ENCODE measurements at regions of chr6 and their contacts with region 1.

Region 1: DNA sequence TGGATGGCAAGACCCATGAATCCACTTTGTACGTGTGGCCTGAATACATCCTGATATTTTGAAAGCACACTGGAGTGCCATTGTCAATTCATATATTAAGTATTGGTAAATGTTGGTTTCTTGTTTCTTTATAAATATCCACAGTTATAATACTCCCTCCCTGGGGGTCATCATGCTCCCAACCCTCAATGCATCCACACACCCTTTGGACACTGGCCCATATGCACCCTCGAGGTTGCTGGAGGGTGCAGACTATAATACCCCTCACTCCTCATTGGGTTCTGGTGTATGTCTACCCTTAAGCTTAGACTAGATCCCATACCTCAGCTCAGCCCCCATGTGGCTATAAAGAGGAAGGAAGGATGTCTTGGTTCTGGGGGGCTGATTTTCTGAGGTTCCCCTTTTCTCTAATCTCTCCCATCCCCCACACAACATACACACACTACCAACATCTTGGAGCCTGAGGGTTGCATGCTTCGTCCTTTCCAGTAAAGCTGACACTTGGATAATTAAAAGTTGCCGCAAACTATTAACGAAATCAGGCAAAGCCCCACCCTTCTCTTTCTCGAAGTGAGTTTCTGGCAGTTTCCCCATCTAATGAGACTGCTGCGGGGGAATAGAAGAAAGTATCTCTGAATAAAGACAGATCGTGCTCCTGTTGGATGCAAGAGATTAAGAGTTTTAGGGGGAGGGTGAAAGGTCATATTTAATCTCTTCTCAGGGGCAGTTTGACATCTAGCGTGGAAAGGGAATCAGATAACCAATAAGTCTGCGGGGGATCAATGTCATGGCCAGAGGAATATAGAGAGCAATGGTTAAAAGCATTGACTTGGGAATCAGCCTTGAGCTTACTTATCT is 7.4 kb downstream of the PIM1 start:
- DNase-seq: no peak
- ATAC-seq: peak; percentile 35
- H3K4me3 Mint-ChIP-seq: peak overlapping the region; percentile 89
- H3K27ac Mint-ChIP-seq: peak overlapping the region; percentile 97
- H3K4me1 Mint-ChIP-seq: peaks cover 62% of the 10 kb centered on the region
- H3K27me3 Mint-ChIP-seq: no peaks in the 10 kb centered on the region

Region 2: DNA sequence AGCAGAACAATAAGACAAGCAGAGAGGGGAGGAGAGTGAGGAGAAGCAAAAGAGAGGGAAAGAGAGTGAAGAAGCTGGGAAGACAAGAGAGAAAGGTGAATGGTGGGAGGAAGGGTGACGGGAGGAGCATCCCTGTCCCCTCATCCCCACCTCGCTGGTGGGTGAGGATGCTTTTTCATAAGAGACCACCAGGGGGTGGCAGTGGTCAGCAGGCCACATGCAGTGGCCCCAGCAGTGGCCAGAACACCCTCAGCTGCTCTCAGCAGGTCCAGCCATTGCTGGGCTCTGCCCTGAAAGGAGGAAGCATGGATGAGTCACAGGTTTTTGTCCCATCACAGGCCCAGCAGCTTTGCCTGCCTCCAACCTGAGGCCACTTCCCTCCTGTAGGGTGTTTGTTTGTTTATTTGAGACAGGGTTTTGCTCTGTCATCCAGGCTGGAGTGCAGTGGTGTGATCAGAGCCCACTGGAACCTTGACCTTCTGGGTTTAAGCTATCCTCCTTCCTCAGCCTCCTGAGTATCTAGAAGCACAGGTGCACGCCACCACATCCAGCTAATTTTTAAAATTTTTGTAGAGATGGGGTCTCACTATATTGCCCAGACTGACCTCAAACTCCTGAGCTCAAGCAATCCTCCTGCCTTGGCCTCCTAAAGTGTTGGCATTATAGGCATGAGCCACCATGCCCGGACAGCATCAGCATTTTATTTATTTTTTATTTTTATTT is 147.9 kb before region 1 on chr6:
- POLR2A ChIA-PET with region 1: interaction called, 372 read pairs
- DNase-seq: no peak
- ATAC-seq: peak; percentile 74
- H3K4me3 Mint-ChIP-seq: peak overlapping the region; percentile 20
- H3K27ac Mint-ChIP-seq: peak overlapping the region; percentile 92
- H3K4me1 Mint-ChIP-seq: peaks cover 54% of the 10 kb centered on the region
- H3K27me3 Mint-ChIP-seq: no peaks in the 10 kb centered on the region

Region 3: GRCh38 chr6:37102279-37103168 is 74.8 kb before region 1 on chr6:
- POLR2A ChIA-PET with region 1: interaction called, 19 read pairs
- DNase-seq: peak; percentile 74
- ATAC-seq: peak; percentile 88
- H3K4me3 Mint-ChIP-seq: peak overlapping the region; percentile 60
- H3K27ac Mint-ChIP-seq: peak overlapping the region; percentile 78
- H3K4me1 Mint-ChIP-seq: peaks cover 35% of the 10 kb centered on the region
- H3K27me3 Mint-ChIP-seq: no peaks in the 10 kb centered on the region

Region 4: DNA sequence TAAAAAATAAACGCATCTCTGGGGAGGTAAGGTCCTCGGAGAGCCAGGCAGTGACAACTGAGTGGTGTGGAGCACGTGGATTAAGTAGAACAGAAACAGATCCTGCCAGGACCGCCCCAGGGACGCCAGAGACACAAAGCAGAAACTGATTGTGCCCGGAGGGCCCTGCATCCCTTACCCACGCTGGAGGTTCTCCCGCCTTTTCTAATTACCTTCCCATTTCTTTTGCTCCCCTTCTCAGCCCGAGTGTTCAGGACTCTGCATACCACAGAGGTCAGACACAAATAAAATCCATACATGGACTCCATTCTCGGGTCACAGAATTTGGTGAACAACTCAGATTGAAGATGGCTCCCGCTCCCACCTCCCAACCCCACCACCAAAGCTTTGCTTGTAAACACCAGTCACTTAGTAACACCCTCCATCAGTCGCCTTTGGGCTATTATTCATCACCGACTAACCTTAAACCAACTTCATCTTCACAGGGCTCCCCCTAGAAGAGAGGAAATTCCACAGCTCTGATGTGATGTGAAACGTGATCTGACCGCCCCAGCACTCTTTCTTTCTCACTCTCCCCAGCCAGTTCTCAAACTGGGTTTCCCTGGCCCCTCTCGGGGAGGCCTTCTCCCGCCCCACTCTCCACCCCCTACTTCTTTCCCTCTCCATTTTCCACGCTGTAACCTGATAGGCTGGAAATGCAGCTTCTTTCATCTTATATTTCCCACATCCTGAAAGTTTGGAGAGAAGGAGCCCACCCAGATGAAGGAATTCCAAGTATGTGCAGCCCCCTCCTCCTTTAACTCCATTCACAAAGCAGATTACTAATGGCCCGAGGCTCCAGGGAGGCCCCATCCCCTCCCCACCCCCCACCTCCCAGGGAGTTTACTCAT is 39.9 kb before region 1 on chr6:
- POLR2A ChIA-PET with region 1: no interaction called
- DNase-seq: no peak
- ATAC-seq: no peak
- H3K4me3 Mint-ChIP-seq: no peak overlapping the region
- H3K27ac Mint-ChIP-seq: no peak overlapping the region
- H3K4me1 Mint-ChIP-seq: peaks cover 11% of the 10 kb centered on the region
- H3K27me3 Mint-ChIP-seq: no peaks in the 10 kb centered on the region

Region 5: DNA sequence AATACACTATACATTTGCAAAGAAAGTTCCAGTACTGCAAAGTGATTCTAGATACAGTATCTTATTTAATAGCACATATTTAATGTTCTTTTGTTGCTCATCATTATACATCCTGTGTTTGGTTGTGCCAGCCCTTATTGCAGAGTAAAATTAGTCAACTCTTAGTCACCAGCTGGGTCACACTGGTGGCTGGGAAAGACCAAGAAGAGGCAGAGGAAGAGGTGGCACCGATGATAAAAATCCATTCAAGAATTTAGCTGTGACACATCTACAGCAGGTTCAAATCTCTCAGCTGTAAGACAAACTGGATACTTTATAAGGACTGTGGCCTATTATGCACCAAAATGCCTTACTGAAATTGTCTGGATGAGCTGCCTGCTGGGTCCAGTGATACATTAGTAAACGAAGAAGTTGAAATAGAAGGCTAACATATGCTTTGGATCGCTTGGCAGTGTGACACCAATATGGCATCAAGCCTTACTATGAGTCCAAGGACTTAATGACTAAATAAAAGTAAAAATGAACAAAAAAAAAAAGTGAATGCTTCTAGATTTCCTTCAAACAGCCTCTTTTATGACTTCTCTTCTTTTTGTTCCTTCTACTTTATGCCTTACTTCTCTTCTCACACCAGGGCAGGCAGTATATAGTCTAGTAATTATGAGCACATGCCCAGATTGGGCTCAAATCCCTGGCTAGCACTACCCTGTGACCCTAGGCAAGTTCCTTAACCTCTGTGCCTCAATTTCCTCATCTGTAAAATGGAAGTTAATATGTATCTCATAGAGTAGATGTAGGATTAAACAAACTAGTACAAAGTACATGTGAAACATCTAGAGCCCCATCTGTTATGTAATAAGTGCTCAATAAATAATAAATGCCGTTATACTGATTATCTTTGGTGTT is 147.1 kb after region 1 on chr6:
- POLR2A ChIA-PET with region 1: no interaction called
- DNase-seq: no peak
- ATAC-seq: no peak
- H3K4me3 Mint-ChIP-seq: no peak overlapping the region
- H3K27ac Mint-ChIP-seq: no peak overlapping the region
- H3K4me1 Mint-ChIP-seq: peaks cover 5% of the 10 kb centered on the region
- H3K27me3 Mint-ChIP-seq: no peaks in the 10 kb centered on the region